Testis (tissue), 5 donors: ENCODE measurements at regions of chr10 and their contacts with region 1.

Region 1: GRCh38 chr10:88553116-88553752 is 29.9 kb downstream of the RNLS start:
- DNase-seq: peak; percentile 64
- H3K4me3 ChIP-seq: no peak overlapping the region
- H3K27ac ChIP-seq: no peak overlapping the region
- H3K4me1 ChIP-seq: no peaks in the 10 kb centered on the region
- H3K27me3 ChIP-seq: no peaks in the 10 kb centered on the region
- CTCF ChIP-seq: peak; percentile 51 to 81 (median 76)
- POLR2A ChIP-seq: no peak

Region 2: DNA sequence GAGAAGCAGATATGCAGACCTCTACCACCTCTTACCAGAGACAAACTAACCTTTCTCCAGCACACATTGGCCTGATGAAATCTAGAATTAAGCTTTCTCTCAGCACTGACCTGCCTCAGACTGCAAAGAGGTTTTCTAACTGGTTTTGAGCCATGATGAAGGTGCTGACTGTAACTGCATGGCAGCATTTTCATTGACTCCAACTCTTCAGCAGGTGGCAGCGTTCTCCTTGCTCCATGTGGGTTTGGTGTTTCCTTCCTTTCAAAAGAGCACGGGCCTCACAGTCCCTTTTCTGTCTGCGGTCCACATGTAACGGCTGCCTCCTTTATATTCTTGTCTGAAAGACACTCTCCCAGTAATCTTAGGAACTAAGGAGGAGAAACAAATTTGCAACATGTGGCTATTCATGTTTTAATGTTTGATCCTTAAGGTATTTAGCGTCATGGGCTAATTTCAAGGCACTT is 702.5 kb before region 1 on chr10:
- intact Hi-C with region 1: loop called (anchors 10 kb)
- DNase-seq: peak; percentile 79
- H3K4me3 ChIP-seq: no peak overlapping the region
- H3K27ac ChIP-seq: no peak overlapping the region
- H3K4me1 ChIP-seq: no peaks in the 10 kb centered on the region
- H3K27me3 ChIP-seq: no peaks in the 10 kb centered on the region
- CTCF ChIP-seq: peak; percentile 37 to 47 (median 40)
- POLR2A ChIP-seq: no peak

Region 3: GRCh38 chr10:88401671-88402347 is 151.4 kb before region 1 on chr10:
- intact Hi-C with region 1: loop called (anchors 10 kb)
- DNase-seq: no peak
- H3K4me3 ChIP-seq: no peak overlapping the region
- H3K27ac ChIP-seq: no peak overlapping the region
- H3K4me1 ChIP-seq: no peaks in the 10 kb centered on the region
- H3K27me3 ChIP-seq: no peaks in the 10 kb centered on the region
- CTCF ChIP-seq: no peak
- POLR2A ChIP-seq: no peak

Region 4: DNA sequence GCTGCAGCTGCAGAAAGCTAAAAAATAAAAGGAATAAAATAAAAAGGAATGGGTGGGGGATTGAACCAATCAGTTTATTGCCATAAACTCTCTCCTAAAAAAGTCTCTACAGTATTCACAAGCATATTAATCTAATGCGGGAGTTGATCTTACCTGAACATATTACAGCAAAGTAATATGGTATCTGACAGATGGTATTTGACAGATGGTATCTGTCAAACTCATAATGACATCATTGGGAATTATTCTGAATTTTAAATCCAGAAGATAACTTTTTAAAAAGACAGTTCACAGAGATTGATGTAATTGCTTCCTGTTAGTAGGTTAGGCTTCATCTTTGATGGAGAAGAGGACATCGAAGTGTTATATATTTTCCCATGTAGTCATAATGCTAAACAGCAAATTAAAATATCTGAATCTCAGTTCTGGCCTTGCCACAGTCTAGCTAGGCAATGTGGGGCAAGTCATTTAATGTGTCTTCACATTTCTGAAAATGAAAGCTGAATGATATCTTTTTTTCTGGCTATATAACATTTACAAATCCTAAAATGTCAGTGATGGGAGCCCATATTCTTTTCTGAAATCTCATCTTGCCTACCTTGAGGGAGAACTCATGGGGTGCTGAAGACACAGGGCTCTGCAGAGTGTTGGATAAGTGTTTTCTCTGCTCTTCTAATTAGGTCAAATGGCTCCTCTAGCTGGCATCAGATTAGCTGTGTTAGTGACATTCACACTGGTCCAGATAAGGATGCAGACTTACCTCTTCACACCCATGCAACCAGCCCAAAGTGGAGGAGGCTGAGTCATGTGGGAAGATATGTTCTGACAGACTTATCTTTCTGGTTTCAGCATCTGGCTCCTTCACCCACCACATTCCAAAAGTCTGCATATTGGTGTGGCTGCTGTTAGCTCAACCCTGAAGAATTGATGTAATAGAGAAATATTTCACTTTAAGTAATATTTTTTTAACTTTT is 247.2 kb after region 1 on chr10:
- intact Hi-C with region 1: no loop called
- DNase-seq: no peak
- H3K4me3 ChIP-seq: no peak overlapping the region
- H3K27ac ChIP-seq: no peak overlapping the region
- H3K4me1 ChIP-seq: no peaks in the 10 kb centered on the region
- H3K27me3 ChIP-seq: no peaks in the 10 kb centered on the region
- CTCF ChIP-seq: no peak
- POLR2A ChIP-seq: no peak